MCF 10A (cell line): ENCODE measurements at regions of chr22 and their contacts with region 1.

Region 1: DNA sequence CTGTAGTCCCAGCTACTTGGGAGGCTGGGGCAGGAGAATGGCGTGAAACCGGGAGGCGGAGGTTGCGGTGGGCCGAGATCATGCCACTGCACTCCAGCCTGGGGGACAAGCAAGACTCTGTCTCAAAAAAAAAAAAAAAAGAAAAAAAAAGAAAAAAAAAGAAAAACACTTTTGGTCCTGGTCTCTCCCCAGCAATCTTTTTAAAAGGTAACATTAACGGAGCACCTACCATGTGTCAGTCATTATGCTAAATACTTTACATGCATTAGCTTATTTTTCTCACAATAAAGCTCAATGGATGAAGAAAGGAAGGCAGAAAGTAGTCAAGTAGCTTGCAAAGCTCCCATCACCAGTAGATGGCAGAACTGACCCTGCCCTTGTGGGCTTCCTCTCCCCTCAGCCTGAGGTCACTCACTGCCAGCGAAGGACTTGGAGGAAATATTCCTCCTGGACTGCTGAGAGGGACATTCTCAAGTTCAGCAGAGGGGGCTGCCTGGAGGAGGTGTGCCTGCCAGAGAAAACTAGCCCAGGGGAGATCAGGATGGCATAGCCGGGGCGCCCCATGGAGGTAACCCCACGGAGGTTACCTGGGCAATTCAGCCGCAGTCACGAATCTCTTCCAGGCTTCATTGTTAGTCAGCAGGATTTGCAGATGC is 15.5 kb downstream of the APOL3 start:
- DNase-seq: peak; percentile 62
- H3K4me3 Mint-ChIP-seq: no peak overlapping the region
- H3K27ac Mint-ChIP-seq: no peak overlapping the region
- H3K4me1 Mint-ChIP-seq: peaks cover 23% of the 10 kb centered on the region
- H3K27me3 Mint-ChIP-seq: peaks cover 32% of the 10 kb centered on the region
- CTCF ChIP-seq: peak; percentile 87

Region 2: GRCh38 chr22:35947794-35948425 is 197.1 kb before region 1 on chr22:
- CTCF ChIA-PET with region 1: no interaction called
- POLR2A ChIA-PET with region 1: no interaction called
- intact Hi-C with region 1: no loop called
- DNase-seq: peak; percentile 49
- H3K4me3 Mint-ChIP-seq: no peak overlapping the region
- H3K27ac Mint-ChIP-seq: no peak overlapping the region
- H3K4me1 Mint-ChIP-seq: peaks cover 5% of the 10 kb centered on the region
- H3K27me3 Mint-ChIP-seq: no peaks in the 10 kb centered on the region
- CTCF ChIP-seq: no peak

Region 3: GRCh38 chr22:36180038-36180880 is 35.2 kb after region 1 on chr22:
- CTCF ChIA-PET with region 1: interaction called, 13 read pairs
- POLR2A ChIA-PET with region 1: interaction called, 3 read pairs
- intact Hi-C with region 1: loop called (anchors 1 kb)
- DNase-seq: peak; percentile 72
- H3K4me3 Mint-ChIP-seq: no peak overlapping the region
- H3K27ac Mint-ChIP-seq: no peak overlapping the region
- H3K4me1 Mint-ChIP-seq: no peaks in the 10 kb centered on the region
- H3K27me3 Mint-ChIP-seq: peaks cover 7% of the 10 kb centered on the region
- CTCF ChIP-seq: peak; percentile 73

Region 4: DNA sequence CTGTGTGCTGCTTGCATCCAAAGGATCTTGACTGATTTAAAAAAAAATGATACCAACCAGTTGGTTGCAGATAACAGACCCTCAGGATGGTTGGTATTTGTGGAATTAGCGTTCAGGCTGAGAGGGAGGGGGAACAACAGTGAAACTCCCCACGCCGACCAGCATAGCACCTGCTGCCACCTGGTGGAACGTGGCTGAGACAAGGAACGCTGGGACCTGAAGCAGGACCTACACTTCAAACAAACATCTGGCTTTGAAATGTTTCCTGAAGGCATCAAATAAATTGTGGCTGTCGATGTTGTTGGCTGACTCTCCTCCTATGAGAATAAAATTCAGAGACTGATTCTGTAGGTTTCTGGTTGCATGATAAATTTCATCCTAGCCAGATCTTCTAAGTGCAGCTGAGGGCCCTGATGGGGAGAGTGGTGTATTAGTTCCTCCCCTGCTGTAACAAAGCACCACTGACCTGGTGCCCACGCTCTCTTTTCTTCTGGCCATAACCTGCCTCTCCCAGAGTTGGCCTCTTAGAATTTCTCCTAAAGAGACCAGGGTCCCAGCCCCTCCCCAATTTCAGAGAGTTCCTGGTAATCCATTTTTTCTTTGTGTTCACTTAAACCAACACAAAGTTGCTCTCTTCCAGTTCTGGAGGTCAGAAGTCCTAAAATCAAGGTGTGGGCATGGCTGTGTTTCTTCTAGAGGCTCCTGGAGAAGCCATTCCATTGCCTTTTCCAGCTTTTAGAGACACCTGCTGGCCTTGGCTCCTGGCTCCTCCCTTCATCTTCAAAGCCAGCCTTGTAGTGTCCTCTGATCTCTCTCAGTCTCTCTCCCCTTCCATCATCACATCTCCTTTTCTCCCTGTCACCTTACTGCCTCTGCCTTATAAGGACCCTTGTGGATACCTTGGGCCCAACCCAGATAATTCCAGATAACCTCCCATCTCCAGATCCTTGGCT is 77.1 kb after region 1 on chr22:
- CTCF ChIA-PET with region 1: interaction called, 8 read pairs
- POLR2A ChIA-PET with region 1: no interaction called
- intact Hi-C with region 1: loop called (anchors 1 kb)
- DNase-seq: peak; percentile 46
- H3K4me3 Mint-ChIP-seq: no peak overlapping the region
- H3K27ac Mint-ChIP-seq: no peak overlapping the region
- H3K4me1 Mint-ChIP-seq: peaks cover 6% of the 10 kb centered on the region
- H3K27me3 Mint-ChIP-seq: peaks cover 37% of the 10 kb centered on the region
- CTCF ChIP-seq: peak; percentile 49

Region 5: DNA sequence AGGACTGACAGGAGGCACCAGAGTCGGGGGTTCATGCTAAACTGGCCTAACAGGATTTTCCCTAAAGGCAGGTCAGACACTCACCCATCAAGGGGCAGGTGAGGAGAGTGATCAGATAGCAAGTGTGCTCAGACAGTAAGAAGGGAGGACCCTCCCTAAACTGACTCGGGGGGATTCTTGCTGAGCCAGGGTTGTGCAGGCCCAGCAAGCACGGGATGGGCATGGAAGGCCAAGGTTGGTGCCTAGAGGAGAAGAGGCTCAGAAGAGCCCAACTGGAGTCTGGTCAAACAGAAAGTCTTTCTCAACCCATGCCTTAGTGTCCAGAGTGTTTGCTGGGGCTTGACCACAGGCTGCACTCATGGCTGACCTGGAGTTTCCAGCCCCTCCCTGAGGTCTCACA is 101.7 kb after region 1 on chr22:
- CTCF ChIA-PET with region 1: no interaction called
- POLR2A ChIA-PET with region 1: no interaction called
- intact Hi-C with region 1: no loop called
- DNase-seq: no peak
- H3K4me3 Mint-ChIP-seq: no peak overlapping the region
- H3K27ac Mint-ChIP-seq: no peak overlapping the region
- H3K4me1 Mint-ChIP-seq: no peaks in the 10 kb centered on the region
- H3K27me3 Mint-ChIP-seq: no peaks in the 10 kb centered on the region
- CTCF ChIP-seq: no peak

Region 6: GRCh38 chr22:36277482-36278291 is 132.7 kb after region 1 on chr22:
- CTCF ChIA-PET with region 1: interaction called, 7 read pairs
- POLR2A ChIA-PET with region 1: no interaction called
- intact Hi-C with region 1: loop called (anchors 2 kb)
- DNase-seq: peak; percentile 66
- H3K4me3 Mint-ChIP-seq: no peak overlapping the region
- H3K27ac Mint-ChIP-seq: peak overlapping the region; percentile 19
- H3K4me1 Mint-ChIP-seq: peaks cover 6% of the 10 kb centered on the region
- H3K27me3 Mint-ChIP-seq: no peaks in the 10 kb centered on the region
- CTCF ChIP-seq: peak; percentile 68